ENCODE measurements at regions of chr6 and their contacts with region 1.

Region 1: GRCh38 chr6:42547407-42548329 is 16.2 kb upstream of the UBR2 start:
- DNase-seq: peak; percentile 82 to 83 (median 82)
- H3K4me3 ChIP-seq: peak overlapping the region; percentile 33 to 79 (median 51)
- H3K4me3 Mint-ChIP-seq: peak overlapping the region; percentile 80 to 91
- H3K27ac ChIP-seq: peak overlapping the region; percentile 18 to 84
- H3K27ac Mint-ChIP-seq: peak overlapping the region; percentile 77 to 94 (median 88)
- H3K4me1 ChIP-seq: peaks cover 23 to 33% of the 10 kb centered on the region in 2 donors
- H3K4me1 Mint-ChIP-seq: peaks cover 35% of the 10 kb centered on the region
- H3K27me3 ChIP-seq: no peaks in the 10 kb centered on the region
- H3K27me3 Mint-ChIP-seq: peaks cover 0 to 7% (median 1%) of the 10 kb centered on the region in 3 donors
- CTCF ChIP-seq: peak; percentile 99

Region 2: GRCh38 chr6:42217519-42218367 is 329.9 kb before region 1 on chr6 and contains the start of gene MRPS10:
- intact Hi-C with region 1: loop called (anchors 5 to 10 kb)
- DNase-seq: peak; percentile 90 to 91 (median 90)
- H3K4me3 ChIP-seq: peak within 1 kb of the TSS; percentile 81 to 97 (median 95)
- H3K4me3 Mint-ChIP-seq: peak within 1 kb of the TSS; percentile 91 to 96
- H3K27ac ChIP-seq: peak within 1 kb of the TSS; percentile 64 to 86
- H3K27ac Mint-ChIP-seq: peak within 1 kb of the TSS; percentile 92 to 98 (median 96)
- H3K4me1 ChIP-seq: peaks cover 12% of the 10 kb centered on the region in 2 donors
- H3K4me1 Mint-ChIP-seq: peaks cover 13% of the 10 kb centered on the region
- H3K27me3 ChIP-seq: no peaks in the 10 kb centered on the region
- H3K27me3 Mint-ChIP-seq: no peaks in the 10 kb centered on the region
- CTCF ChIP-seq: no peak
- polyA plus RNA-seq, gene MRPS10: 9.2 to 33.0 (median 31.4) TPM

Region 3: GRCh38 chr6:42260972-42261371 is 286.7 kb before region 1 on chr6:
- intact Hi-C with region 1: loop called (anchors 5 to 10 kb)
- DNase-seq: peak in 1 of 3 donors; percentile 15
- H3K4me3 ChIP-seq: no peak overlapping the region
- H3K4me3 Mint-ChIP-seq: no peak overlapping the region
- H3K27ac ChIP-seq: peak overlapping the region in 1 of 2 donors; percentile 45
- H3K27ac Mint-ChIP-seq: peak overlapping the region in 2 of 7 donors; percentile 7 to 84
- H3K4me1 ChIP-seq: no peaks in the 10 kb centered on the region
- H3K4me1 Mint-ChIP-seq: no peaks in the 10 kb centered on the region
- H3K27me3 ChIP-seq: no peaks in the 10 kb centered on the region
- H3K27me3 Mint-ChIP-seq: peaks cover 0 to 1% (median 1%) of the 10 kb centered on the region in 3 donors
- CTCF ChIP-seq: peak; percentile 73

Region 4: GRCh38 chr6:42315991-42316378 is 231.7 kb before region 1 on chr6:
- intact Hi-C with region 1: loop called in 1 of 2 experiments (anchors 10 kb)
- DNase-seq: peak; percentile 91 to 97 (median 92)
- H3K4me3 ChIP-seq: no peak overlapping the region
- H3K4me3 Mint-ChIP-seq: peak overlapping the region in 1 of 2 donors; percentile 55
- H3K27ac ChIP-seq: peak overlapping the region; percentile 96 to 100
- H3K27ac Mint-ChIP-seq: peak overlapping the region; percentile 99 to 100 (median 100)
- H3K4me1 ChIP-seq: peaks cover 49 to 67% of the 10 kb centered on the region in 2 donors
- H3K4me1 Mint-ChIP-seq: peaks cover 74% of the 10 kb centered on the region
- H3K27me3 ChIP-seq: no peaks in the 10 kb centered on the region
- H3K27me3 Mint-ChIP-seq: peaks cover 0 to 2% (median 0%) of the 10 kb centered on the region in 3 donors
- CTCF ChIP-seq: no peak

Region 5: DNA sequence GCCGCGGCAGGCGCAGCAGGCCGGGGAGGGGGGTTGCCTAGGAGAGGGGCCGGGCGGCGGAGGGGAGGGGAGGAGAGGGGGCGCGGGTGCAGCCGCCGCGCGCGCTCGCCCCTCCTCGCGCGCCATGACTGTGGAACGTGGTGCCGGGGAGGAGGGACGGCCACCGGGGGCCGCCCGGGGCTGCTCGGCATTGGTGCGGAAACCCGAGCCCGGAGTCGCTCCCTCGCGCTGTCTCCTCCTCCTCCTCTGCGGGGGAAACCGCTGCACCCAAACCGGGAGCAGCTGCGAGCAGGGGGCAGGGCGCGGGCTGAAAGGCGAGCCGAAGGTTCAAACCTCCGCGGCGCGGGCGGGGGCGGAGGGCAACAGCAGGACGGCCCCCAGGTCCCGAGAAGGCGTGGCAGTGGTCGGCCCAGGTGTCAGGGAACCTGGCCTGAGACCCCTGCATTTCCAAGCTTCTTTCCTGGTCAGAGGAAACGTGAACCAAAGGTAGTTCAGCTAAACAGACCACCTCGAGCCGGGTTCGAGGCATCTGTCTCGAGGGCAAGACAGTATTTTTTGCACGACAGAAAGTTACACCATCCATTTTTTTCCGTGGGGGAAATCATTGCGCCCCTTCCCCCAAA is 94.5 kb before region 1 on chr6:
- intact Hi-C with region 1: loop called (anchors 5 to 10 kb)
- DNase-seq: peak; percentile 26 to 40 (median 33)
- H3K4me3 ChIP-seq: peak overlapping the region; percentile 53 to 96 (median 63)
- H3K4me3 Mint-ChIP-seq: peak overlapping the region; percentile 98 to 100
- H3K27ac ChIP-seq: peak overlapping the region; percentile 39 to 82
- H3K27ac Mint-ChIP-seq: peak overlapping the region in 1 of 7 donors; percentile 13
- H3K4me1 ChIP-seq: peaks cover 42 to 43% of the 10 kb centered on the region in 2 donors
- H3K4me1 Mint-ChIP-seq: peaks cover 38% of the 10 kb centered on the region
- H3K27me3 ChIP-seq: peaks cover 0 to 4% of the 10 kb centered on the region in 2 donors
- H3K27me3 Mint-ChIP-seq: peaks cover 11 to 19% (median 14%) of the 10 kb centered on the region in 3 donors
- CTCF ChIP-seq: no peak

Region 6: DNA sequence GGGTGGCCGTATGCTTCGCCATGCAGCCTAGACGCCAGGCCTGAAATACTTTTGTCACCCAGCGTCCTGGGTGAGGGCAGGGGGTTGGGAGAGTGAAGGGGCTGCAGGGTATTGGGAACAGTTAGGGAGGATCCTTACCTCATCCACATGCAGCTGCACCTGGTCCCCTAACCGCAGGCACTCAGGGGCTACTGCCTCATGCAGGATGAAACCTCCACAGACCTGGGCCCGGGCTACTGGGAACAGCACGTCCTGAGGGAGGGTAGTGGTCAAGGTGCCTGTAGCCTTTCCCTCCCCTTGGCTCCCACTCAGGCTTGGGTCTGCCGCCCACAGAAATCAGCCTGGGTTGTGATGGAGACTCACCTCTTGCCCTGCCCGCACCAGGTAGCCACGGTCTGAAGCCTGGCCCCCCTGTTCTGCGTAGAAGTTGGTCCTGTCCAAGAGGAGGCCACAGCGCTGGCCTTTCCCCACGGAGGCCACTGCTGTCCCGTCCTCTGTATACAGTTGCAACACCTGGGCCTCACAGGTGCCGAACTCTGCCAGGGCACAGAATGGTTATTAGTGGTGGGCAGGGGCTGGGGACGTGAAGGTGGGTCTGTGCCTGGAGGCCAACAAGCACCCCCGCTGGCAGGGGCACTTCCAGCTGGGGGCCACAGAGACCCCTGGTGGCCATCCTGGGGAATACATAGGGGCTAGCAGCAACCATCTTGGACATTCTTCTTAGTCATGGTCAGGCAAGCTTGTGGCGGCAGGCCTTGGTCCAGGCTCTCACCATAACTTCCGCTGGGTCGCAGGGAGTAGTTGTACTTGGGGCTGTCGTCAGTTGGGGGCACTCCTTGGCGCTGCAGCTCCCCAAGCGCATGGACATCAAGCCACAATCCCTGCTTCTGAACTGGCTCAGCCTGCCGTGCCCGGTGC is 1756.9 kb after region 1 on chr6:
- intact Hi-C with region 1: no loop called
- DNase-seq: peak; percentile 25 to 57 (median 26)
- H3K4me3 ChIP-seq: no peak overlapping the region
- H3K4me3 Mint-ChIP-seq: no peak overlapping the region
- H3K27ac ChIP-seq: no peak overlapping the region
- H3K27ac Mint-ChIP-seq: peak overlapping the region in 1 of 7 donors; percentile 37
- H3K4me1 ChIP-seq: no peaks in the 10 kb centered on the region
- H3K4me1 Mint-ChIP-seq: peaks cover 9% of the 10 kb centered on the region
- H3K27me3 ChIP-seq: no peaks in the 10 kb centered on the region
- H3K27me3 Mint-ChIP-seq: peaks cover 0 to 2% (median 0%) of the 10 kb centered on the region in 3 donors
- CTCF ChIP-seq: peak; percentile 89